Dorsolateral prefrontal cortex (tissue), 120 donors: ENCODE measurements at regions of chr3 and their contacts with region 1.

Region 1: DNA sequence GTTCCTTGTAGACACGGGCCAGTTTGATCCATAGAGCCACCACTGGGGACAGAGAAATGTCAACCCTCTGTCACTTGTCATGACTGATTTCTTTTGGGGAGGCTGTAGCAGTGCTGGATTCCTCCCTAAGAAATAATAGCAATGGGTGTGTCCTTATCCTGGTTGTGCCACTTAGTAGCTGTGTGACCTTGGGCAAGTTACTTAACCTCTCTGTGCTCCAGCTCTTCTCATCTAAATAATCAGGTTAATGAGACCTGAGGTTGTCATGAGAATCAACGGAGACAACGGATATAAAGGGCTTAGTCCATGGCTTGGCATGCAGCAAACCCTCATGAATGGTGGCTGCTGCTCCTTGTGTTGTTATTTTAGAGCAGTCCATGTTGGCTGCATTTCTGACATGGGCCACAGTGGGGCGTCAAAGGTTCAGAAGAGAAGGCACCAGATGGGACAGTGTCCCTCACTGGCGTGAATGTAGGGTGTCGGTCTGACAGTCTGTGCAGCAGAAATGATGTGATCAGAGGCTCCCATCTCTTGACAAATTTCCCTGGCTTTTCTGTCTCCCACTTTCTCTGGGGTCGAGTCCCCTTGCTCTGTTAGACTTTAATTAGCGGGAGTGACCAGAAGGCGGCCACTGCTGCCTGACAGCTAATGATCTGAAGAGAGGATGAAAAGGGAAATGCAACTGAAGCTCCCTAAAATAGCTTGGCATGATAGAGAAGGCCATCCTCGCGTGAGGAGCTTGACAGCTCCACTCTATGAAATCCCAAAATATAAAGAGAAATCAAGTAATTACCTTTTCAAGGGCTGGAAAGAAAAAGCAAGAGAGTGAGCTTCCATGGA is 209.4 kb downstream of the CADPS start:
- DNase-seq: peak; percentile 55 to 89 (median 79)
- H3K4me3 ChIP-seq: peak overlapping the region in 25 of 59 donors; percentile 3 to 43 (median 22)
- H3K27ac ChIP-seq: peak overlapping the region in 24 of 59 donors; percentile 5 to 64 (median 38)
- H3K27me3 ChIP-seq: peaks cover 0 to 5% (median 0%) of the 10 kb centered on the region in 45 donors
- CTCF ChIP-seq: peak; percentile 20 to 88 (median 72)

Region 2: DNA sequence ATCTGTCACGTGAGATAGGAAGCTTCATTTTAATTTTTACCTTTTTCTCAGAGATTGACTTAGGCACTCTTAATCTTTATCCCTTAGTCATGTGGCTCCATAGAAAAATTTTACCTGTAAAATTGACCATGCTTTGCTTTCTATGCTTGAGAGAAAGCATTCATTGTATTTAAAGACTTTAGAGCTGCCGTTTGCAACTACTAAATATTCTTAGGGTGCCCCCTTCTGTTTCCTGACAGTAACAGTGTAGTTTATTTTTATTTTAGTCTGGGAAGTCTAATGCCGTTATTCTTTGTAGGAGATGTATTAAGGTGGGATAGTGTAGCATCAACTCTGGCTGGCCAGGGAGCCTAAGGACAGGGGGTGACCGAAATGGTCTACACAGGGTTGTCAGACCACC is 527.8 kb after region 1 on chr3:
- intact Hi-C with region 1: loop called (anchors 5 to 10 kb)
- DNase-seq: no peak
- H3K4me3 ChIP-seq: no peak overlapping the region
- H3K27ac ChIP-seq: no peak overlapping the region
- H3K27me3 ChIP-seq: no peaks in the 10 kb centered on the region
- CTCF ChIP-seq: peak; percentile 36 to 85 (median 60)

Region 3: DNA sequence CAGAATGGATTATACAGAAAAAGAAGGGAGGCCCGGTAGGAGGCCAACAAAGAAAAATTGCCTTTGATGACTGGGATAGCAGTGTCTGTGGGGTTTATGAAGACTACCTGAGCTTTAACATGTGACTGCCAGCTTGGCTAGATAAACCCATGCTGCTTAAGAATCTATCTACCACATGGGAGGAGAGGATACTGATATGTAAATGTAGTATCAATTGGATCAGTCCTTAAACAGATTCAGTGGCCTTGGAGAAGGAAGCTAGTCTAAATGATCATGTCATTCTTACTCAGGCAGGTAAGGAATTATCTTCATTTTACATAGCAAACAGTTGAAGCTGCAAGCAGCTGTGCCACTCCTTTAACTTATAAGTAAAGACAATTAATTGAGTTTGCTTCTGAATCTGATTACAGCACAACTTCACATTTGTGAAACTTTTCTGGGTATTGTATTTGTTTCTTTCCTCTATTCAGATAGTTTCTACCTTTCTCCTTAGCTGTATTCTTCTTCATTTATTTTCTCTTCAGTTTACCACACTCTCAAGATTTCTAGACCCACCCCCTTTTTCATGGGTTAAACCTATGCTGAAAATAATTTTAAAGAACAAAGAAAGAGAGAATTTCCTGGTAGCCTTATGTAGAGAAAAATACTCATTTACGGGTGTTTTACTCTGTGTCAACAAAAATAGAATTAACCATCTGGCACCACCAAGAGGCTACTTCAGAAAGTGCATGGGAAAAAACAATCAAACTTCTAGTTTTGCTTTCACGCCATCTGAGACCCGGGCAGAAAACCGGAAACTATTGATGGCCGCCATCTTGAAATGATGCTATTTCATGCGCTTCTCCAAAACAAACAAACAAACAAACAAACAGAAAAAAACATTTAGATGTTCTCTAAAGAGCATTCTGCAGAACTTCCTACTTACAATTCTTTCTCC is 562.5 kb after region 1 on chr3:
- intact Hi-C with region 1: loop called in 1 of 2 experiments (anchors 10 kb)
- DNase-seq: peak in 3 of 10 donors; percentile 27 to 48 (median 44)
- H3K4me3 ChIP-seq: peak overlapping the region in 18 of 59 donors; percentile 7 to 40 (median 25)
- H3K27ac ChIP-seq: peak overlapping the region in 1 of 59 donors; percentile 44
- H3K27me3 ChIP-seq: peaks cover 0 to 17% (median 0%) of the 10 kb centered on the region in 45 donors
- CTCF ChIP-seq: peak; percentile 37 to 74 (median 62)